Psoas muscle (tissue), 8 donors: ENCODE measurements at regions of chr14 and their contacts with region 1.

Region 1: DNA sequence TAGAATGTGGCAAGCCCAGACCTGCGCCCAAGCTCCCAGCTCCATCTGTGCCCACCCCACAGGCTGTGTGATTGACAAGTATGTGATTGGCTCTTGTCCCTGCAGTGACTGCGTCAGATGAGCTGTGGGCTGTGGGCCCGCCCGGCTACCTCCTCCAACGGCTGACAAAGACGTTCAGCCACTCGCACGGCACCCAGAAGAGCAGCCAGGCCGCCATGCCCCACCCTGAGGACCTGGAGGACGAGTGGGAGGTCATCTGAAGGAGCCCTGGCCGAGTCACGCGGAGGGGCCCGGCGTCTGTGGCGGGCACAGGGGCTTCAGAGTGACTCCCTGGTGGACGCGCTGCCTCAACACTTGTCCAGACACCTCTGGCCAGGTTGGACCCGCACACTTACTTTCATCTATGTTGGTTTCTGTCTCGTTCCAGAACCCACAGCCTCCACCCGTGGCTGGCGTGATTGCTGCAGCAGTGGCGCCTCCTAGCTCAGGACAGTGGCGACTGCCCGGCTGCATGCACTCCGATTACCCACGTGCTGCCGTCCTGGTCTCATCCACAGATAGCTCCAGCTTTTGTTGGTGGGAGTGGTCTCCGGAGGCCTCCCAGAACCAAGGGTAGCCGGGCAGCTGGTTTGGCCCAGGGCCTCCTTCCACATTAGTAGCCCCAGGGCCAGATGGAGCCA is 11.4 kb downstream of the ANKRD9 start:
- DNase-seq: peak in 1 of 2 donors; percentile 68
- ATAC-seq: peak in 3 of 4 donors; percentile 3 to 22 (median 14)
- H3K4me3 ChIP-seq: peak overlapping the region; percentile 15
- H3K27ac ChIP-seq: peak overlapping the region; percentile 90
- H3K4me1 ChIP-seq: peaks cover 43% of the 10 kb centered on the region
- H3K27me3 ChIP-seq: no peaks in the 10 kb centered on the region
- CTCF ChIP-seq: peak; percentile 21

Region 2: DNA sequence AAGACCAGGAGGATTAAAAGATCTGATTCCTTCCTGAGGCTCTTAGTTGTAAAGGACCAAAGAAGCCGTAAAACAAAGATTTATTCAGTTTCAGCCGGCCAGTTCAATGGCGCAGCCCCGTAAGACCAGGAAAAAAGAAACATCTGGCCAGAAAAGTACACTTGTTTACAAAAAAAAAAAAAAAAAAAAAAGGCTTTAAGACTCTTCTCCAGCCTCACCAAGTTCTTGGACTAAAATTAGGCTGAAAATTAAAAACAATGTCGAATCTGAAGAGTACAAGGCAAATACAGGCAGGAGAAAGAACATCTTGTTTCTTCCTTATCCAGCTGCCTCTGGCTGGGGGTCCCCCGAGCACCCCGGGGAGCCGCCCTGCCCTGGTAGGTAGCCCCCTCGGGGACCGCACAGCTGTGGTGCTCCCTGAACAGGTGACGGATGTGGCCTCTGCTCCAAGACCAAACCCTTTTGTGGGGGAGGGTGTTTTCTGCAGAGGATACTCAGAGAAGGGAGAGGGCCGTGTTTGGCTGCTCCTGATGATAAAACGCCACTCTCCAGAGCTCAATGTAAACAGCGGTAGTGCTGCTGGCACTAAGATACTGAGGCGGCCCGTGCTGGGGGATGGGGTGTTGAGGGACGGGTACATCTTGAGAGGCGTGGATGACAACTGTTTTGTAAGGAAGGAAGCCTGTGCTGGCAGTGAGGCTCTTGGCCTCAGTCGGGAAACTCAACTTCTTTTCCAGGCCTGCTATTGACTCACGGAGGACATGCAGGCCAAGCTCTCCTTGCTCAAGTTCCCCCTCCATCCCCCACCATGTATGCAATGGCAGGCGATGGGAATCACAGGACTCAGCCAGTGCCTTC is 1137.9 kb before region 1 on chr14:
- intact Hi-C with region 1: no loop called
- DNase-seq: peak; percentile 78 to 88
- ATAC-seq: peak; percentile 16 to 59 (median 42)
- H3K4me3 ChIP-seq: no peak overlapping the region
- H3K27ac ChIP-seq: peak overlapping the region; percentile 30
- H3K4me1 ChIP-seq: no peaks in the 10 kb centered on the region
- H3K27me3 ChIP-seq: peaks cover 0 to 29% (median 4%) of the 10 kb centered on the region in 3 donors
- CTCF ChIP-seq: no peak

Region 3: GRCh38 chr14:102408724-102409123 is 89.4 kb before region 1 on chr14:
- intact Hi-C with region 1: no loop called
- DNase-seq: no peak
- ATAC-seq: peak; percentile 80 to 87 (median 84)
- H3K4me3 ChIP-seq: no peak overlapping the region
- H3K27ac ChIP-seq: peak overlapping the region; percentile 80
- H3K4me1 ChIP-seq: peaks cover 23% of the 10 kb centered on the region
- H3K27me3 ChIP-seq: no peaks in the 10 kb centered on the region
- CTCF ChIP-seq: no peak

Region 4: DNA sequence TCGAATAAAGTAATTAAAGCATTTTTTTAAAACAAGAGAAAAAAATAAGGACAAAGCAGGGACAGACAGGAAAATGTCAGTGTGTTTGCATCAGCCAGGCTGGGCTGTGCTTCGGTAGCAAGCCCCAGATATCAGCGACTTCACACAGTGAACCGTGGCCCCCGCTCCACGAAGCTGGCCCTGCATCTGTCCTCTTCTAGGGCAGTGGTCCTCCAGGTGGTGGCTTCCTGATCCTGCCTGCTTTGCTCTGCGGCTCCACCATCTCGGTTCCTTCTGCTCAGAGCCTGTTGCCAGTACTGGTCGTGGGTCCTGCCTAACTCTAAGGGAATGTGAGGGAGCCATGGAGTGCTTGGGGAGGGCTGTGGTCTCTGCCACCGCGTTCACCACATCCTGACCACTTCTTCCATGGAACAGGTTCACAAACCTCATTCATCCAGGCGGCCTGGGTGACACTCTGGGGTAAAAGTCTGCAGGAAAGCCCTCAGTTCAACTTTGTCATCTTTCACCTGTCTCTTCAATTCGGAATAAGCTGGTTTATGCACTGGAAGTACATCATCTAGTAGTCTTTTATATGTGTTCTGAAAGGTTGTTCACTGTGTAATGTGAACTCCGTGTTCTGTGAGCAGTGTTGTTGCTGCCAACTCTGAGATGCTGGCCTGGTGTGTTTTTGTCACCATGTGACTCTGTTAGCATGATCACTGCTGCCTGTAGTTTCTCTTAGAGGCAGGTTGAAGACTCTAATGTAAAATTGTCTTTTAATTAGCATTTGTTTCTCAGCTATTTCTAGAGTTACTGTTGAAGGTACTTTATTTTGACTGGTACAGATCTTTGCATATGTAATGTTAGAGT is 36.4 kb before region 1 on chr14:
- intact Hi-C with region 1: loop called in 1 of 2 experiments (anchors 5 kb)
- DNase-seq: no peak
- ATAC-seq: peak; percentile 77 to 94 (median 86)
- H3K4me3 ChIP-seq: no peak overlapping the region
- H3K27ac ChIP-seq: peak overlapping the region; percentile 84
- H3K4me1 ChIP-seq: peaks cover 20% of the 10 kb centered on the region
- H3K27me3 ChIP-seq: no peaks in the 10 kb centered on the region
- CTCF ChIP-seq: no peak

Region 5: DNA sequence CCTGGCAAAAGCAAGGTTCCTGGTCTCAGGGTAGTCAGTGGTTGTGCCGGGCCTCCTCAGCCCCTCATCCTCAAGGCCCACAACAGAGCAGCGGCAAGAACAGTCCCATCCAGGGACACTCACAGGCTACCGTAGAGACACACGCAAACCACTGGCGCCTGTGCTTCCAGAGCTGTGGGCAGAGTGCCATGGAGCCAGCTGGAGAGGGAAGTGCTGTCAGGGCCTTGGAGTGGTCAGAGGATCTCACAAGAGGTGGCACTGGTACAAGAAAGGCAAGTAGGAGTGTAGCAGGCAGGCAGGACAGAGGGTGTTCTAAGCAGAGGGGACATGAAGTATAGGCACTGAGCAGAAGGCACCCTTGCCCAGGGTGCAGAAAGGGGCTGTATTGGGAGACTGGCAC is 23.2 kb before region 1 on chr14:
- intact Hi-C with region 1: loop called in 1 of 2 experiments (anchors 2 kb)
- DNase-seq: peak; percentile 85 to 95
- ATAC-seq: peak; percentile 95 to 97 (median 95)
- H3K4me3 ChIP-seq: peak overlapping the region; percentile 26
- H3K27ac ChIP-seq: peak overlapping the region; percentile 67
- H3K4me1 ChIP-seq: peaks cover 31% of the 10 kb centered on the region
- H3K27me3 ChIP-seq: no peaks in the 10 kb centered on the region
- CTCF ChIP-seq: no peak

Region 6: DNA sequence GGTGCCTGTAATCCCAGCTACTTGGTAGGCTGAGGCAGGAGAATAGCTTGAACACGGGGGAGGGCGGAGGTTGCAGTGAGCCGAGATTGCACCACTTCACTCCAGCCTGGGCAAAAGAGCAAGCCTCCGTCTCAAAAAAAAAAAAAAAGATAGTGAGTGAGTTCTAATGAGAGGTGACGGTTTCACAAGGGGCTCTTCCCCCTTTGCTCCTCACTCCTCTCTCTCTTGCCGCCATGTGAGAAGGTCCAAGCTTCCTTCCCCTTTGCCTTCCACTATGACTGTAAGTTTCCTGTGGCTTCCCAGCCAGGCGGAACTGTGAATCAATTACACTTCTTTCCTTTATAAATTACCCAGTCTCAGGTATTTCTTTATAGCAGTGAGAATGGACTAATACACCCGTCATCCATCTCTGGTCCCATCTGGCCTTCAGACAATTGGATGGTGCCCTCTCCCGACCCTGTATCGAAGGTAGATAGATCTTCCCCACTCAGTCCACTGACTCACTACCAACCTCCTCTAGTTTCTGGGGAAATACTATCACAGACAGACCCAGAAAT is 67.3 kb after region 1 on chr14:
- intact Hi-C with region 1: no loop called
- DNase-seq: no peak
- ATAC-seq: no peak
- H3K4me3 ChIP-seq: no peak overlapping the region
- H3K27ac ChIP-seq: no peak overlapping the region
- H3K4me1 ChIP-seq: no peaks in the 10 kb centered on the region
- H3K27me3 ChIP-seq: no peaks in the 10 kb centered on the region
- CTCF ChIP-seq: no peak